ENCODE measurements at regions of chr4 and their contacts with region 1.

Region 1: DNA sequence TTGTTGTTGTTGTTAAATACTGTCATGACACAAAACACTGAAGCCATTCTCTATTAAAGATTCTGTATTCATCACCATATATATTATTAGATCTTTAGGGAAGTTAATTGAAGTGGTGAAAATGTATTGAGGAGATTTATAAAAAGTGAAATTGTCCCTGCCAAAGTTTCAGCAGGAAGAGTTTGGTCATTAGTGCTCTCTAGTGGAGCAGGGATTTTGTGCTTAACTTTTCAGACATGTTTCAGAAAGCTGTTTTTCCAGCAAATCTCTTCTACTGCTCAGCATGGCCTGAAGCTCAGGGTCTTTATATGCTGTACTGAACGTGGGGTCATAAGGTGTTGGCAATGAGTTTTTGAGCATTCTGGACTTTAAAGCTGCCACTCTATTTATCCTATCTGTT is 36.7 kb upstream of the CXXC4 start:
- DNase-seq: no peak
- H3K4me3 ChIP-seq: no peak overlapping the region
- CTCF ChIP-seq: peak; percentile 4

Region 2: GRCh38 chr4:104589264-104589868 is 58.0 kb after region 1 on chr4:
- in situ Hi-C with region 1: loop called (anchors 5 kb)
- DNase-seq: no peak
- H3K4me3 ChIP-seq: no peak overlapping the region
- CTCF ChIP-seq: no peak

Measured in astrocyte of the cerebellum (primary cell).